Right lobe of liver (tissue), 6 donors: ENCODE measurements at regions of chr20 and their contacts with region 1.

Region 1: GRCh38 chr20:3115190-3116107 is 30.9 kb upstream of the AVP start:
- DNase-seq: no peak
- ATAC-seq: peak; percentile 59 to 71 (median 63)
- H3K4me3 ChIP-seq: no peak overlapping the region
- H3K27ac ChIP-seq: no peak overlapping the region
- H3K4me1 ChIP-seq: peaks cover 0 to 15% (median 3%) of the 10 kb centered on the region in 4 donors
- H3K27me3 ChIP-seq: no peaks in the 10 kb centered on the region
- CTCF ChIP-seq: peak; percentile 48 to 78 (median 76)
- POLR2A ChIP-seq: no peak

Region 2: GRCh38 chr20:3032624-3033023 is 82.8 kb before region 1 on chr20:
- intact Hi-C with region 1: no loop called
- DNase-seq: no peak
- ATAC-seq: peak in 2 of 4 donors; percentile 29 to 58
- H3K4me3 ChIP-seq: no peak overlapping the region
- H3K27ac ChIP-seq: no peak overlapping the region
- H3K4me1 ChIP-seq: peaks cover 0 to 4% (median 0%) of the 10 kb centered on the region in 4 donors
- H3K27me3 ChIP-seq: no peaks in the 10 kb centered on the region
- CTCF ChIP-seq: no peak
- POLR2A ChIP-seq: no peak

Region 3: GRCh38 chr20:3045816-3046676 is 69.4 kb before region 1 on chr20 and contains the start of gene MRPS26:
- intact Hi-C with region 1: loop called in 1 of 2 experiments (anchors 10 kb)
- DNase-seq: peak; percentile 95 to 96 (median 95)
- ATAC-seq: peak; percentile 81 to 93 (median 87)
- H3K4me3 ChIP-seq: peak within 1 kb of the TSS; percentile 81 to 98 (median 86)
- H3K27ac ChIP-seq: peak within 1 kb of the TSS; percentile 63 to 86 (median 77)
- H3K4me1 ChIP-seq: peaks cover 0 to 27% (median 5%) of the 10 kb centered on the region in 4 donors
- H3K27me3 ChIP-seq: no peaks in the 10 kb centered on the region
- CTCF ChIP-seq: no peak
- POLR2A ChIP-seq: peak; percentile 83
- total RNA-seq, gene MRPS26: 27.8 to 59.1 (median 38.0) TPM

Region 4: GRCh38 chr20:3059489-3059888 is 56.0 kb before region 1 on chr20:
- intact Hi-C with region 1: no loop called
- DNase-seq: no peak
- ATAC-seq: peak in 1 of 4 donors; percentile 35
- H3K4me3 ChIP-seq: no peak overlapping the region
- H3K27ac ChIP-seq: no peak overlapping the region
- H3K4me1 ChIP-seq: no peaks in the 10 kb centered on the region
- H3K27me3 ChIP-seq: no peaks in the 10 kb centered on the region
- CTCF ChIP-seq: no peak
- POLR2A ChIP-seq: no peak

Region 5: GRCh38 chr20:3173610-3174441 is 58.4 kb after region 1 on chr20:
- intact Hi-C with region 1: no loop called
- DNase-seq: peak; percentile 91 to 94 (median 93)
- ATAC-seq: peak; percentile 86 to 95 (median 90)
- H3K4me3 ChIP-seq: peak overlapping the region; percentile 86 to 93 (median 87)
- H3K27ac ChIP-seq: peak overlapping the region; percentile 74 to 90 (median 79)
- H3K4me1 ChIP-seq: peaks cover 0 to 17% (median 6%) of the 10 kb centered on the region in 4 donors
- H3K27me3 ChIP-seq: no peaks in the 10 kb centered on the region
- CTCF ChIP-seq: no peak
- POLR2A ChIP-seq: peak; percentile 53